B cell (primary cell): ENCODE measurements at regions of chr17 and their contacts with region 1.

Region 1: GRCh38 chr17:69523244-69523861 is 108.9 kb downstream of the MAP2K6 start:
- DNase-seq: peak; percentile 49
- ATAC-seq: peak; percentile 41
- H3K4me3 ChIP-seq: no peak overlapping the region
- H3K4me3 Mint-ChIP-seq: no peak overlapping the region
- H3K27ac ChIP-seq: no peak overlapping the region
- H3K27ac Mint-ChIP-seq: no peak overlapping the region
- H3K4me1 ChIP-seq: peaks cover 5% of the 10 kb centered on the region in 2 donors
- H3K4me1 Mint-ChIP-seq: peaks cover 13% of the 10 kb centered on the region
- H3K27me3 ChIP-seq: peaks cover 0 to 24% (median 11%) of the 10 kb centered on the region in 4 experiments
- H3K27me3 Mint-ChIP-seq: peaks cover 23% of the 10 kb centered on the region
- CTCF ChIP-seq: peak; percentile 75

Region 2: GRCh38 chr17:68771867-68772515 is 751.4 kb before region 1 on chr17:
- CTCF ChIA-PET with region 1: interaction called, 3 read pairs
- POLR2A ChIA-PET with region 1: no interaction called
- intact Hi-C with region 1: loop called (anchors 10 kb)
- DNase-seq: peak; percentile 65
- ATAC-seq: peak; percentile 49
- H3K4me3 ChIP-seq: peak overlapping the region in 1 of 5 experiments; percentile 25
- H3K4me3 Mint-ChIP-seq: peak overlapping the region; percentile 68
- H3K27ac ChIP-seq: no peak overlapping the region
- H3K27ac Mint-ChIP-seq: peak overlapping the region; percentile 26
- H3K4me1 ChIP-seq: no peaks in the 10 kb centered on the region
- H3K4me1 Mint-ChIP-seq: peaks cover 20% of the 10 kb centered on the region
- H3K27me3 ChIP-seq: no peaks in the 10 kb centered on the region
- H3K27me3 Mint-ChIP-seq: no peaks in the 10 kb centered on the region
- CTCF ChIP-seq: peak; percentile 72

Region 3: GRCh38 chr17:69335058-69335457 is 188.3 kb before region 1 on chr17:
- CTCF ChIA-PET with region 1: interaction called, 19 read pairs
- POLR2A ChIA-PET with region 1: no interaction called
- intact Hi-C with region 1: no loop called
- DNase-seq: peak; percentile 19
- ATAC-seq: peak; percentile 31
- H3K4me3 ChIP-seq: no peak overlapping the region
- H3K4me3 Mint-ChIP-seq: no peak overlapping the region
- H3K27ac ChIP-seq: no peak overlapping the region
- H3K27ac Mint-ChIP-seq: no peak overlapping the region
- H3K4me1 ChIP-seq: no peaks in the 10 kb centered on the region
- H3K4me1 Mint-ChIP-seq: no peaks in the 10 kb centered on the region
- H3K27me3 ChIP-seq: peaks cover 0 to 14% (median 1%) of the 10 kb centered on the region in 4 experiments
- H3K27me3 Mint-ChIP-seq: peaks cover 25% of the 10 kb centered on the region
- CTCF ChIP-seq: peak; percentile 19

Region 4: GRCh38 chr17:69390795-69391501 is 132.4 kb before region 1 on chr17:
- CTCF ChIA-PET with region 1: interaction called, 10 read pairs
- POLR2A ChIA-PET with region 1: no interaction called
- intact Hi-C with region 1: no loop called
- DNase-seq: no peak
- ATAC-seq: no peak
- H3K4me3 ChIP-seq: no peak overlapping the region
- H3K4me3 Mint-ChIP-seq: no peak overlapping the region
- H3K27ac ChIP-seq: no peak overlapping the region
- H3K27ac Mint-ChIP-seq: no peak overlapping the region
- H3K4me1 ChIP-seq: no peaks in the 10 kb centered on the region
- H3K4me1 Mint-ChIP-seq: no peaks in the 10 kb centered on the region
- H3K27me3 ChIP-seq: no peaks in the 10 kb centered on the region
- H3K27me3 Mint-ChIP-seq: peaks cover 38% of the 10 kb centered on the region
- CTCF ChIP-seq: no peak

Region 5: GRCh38 chr17:69501591-69502468 is 21.5 kb before region 1 on chr17:
- CTCF ChIA-PET with region 1: interaction called, 47 read pairs
- POLR2A ChIA-PET with region 1: no interaction called
- intact Hi-C with region 1: no loop called
- DNase-seq: no peak
- ATAC-seq: peak; percentile 23
- H3K4me3 ChIP-seq: peak overlapping the region in 1 of 5 experiments; percentile 70
- H3K4me3 Mint-ChIP-seq: peak overlapping the region; percentile 57
- H3K27ac ChIP-seq: no peak overlapping the region
- H3K27ac Mint-ChIP-seq: peak overlapping the region; percentile 28
- H3K4me1 ChIP-seq: peaks cover 41 to 44% of the 10 kb centered on the region in 2 donors
- H3K4me1 Mint-ChIP-seq: peaks cover 63% of the 10 kb centered on the region
- H3K27me3 ChIP-seq: no peaks in the 10 kb centered on the region
- H3K27me3 Mint-ChIP-seq: no peaks in the 10 kb centered on the region
- CTCF ChIP-seq: no peak

Region 6: DNA sequence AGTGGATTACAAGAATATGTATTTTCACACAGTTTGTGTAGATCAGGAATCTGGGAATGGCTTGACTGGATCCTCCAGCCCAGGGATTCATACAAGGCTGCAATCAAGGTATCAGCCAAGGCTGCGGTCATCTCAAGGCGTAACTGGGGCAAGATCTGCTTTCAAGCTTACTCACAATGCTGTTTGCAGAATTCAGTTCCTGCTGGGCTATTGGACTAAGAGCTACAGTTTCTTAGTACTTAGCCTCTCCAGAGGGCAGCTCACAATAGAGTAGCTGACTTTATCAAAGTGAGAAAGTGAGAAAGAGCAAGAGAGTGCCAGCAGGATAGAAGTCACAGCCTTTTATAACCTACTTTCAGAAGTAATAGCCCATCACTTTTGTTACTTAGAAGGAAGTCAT is 102.1 kb after region 1 on chr17:
- CTCF ChIA-PET with region 1: no interaction called
- POLR2A ChIA-PET with region 1: no interaction called
- intact Hi-C with region 1: no loop called
- DNase-seq: no peak
- ATAC-seq: no peak
- H3K4me3 ChIP-seq: no peak overlapping the region
- H3K4me3 Mint-ChIP-seq: no peak overlapping the region
- H3K27ac ChIP-seq: no peak overlapping the region
- H3K27ac Mint-ChIP-seq: no peak overlapping the region
- H3K4me1 ChIP-seq: no peaks in the 10 kb centered on the region
- H3K4me1 Mint-ChIP-seq: no peaks in the 10 kb centered on the region
- H3K27me3 ChIP-seq: no peaks in the 10 kb centered on the region
- H3K27me3 Mint-ChIP-seq: peaks cover 7% of the 10 kb centered on the region
- CTCF ChIP-seq: no peak

Region 7: GRCh38 chr17:70144260-70144846 is 621.0 kb after region 1 on chr17:
- CTCF ChIA-PET with region 1: interaction called, 19 read pairs
- POLR2A ChIA-PET with region 1: no interaction called
- intact Hi-C with region 1: no loop called
- DNase-seq: peak; percentile 38
- ATAC-seq: no peak
- H3K4me3 ChIP-seq: no peak overlapping the region
- H3K4me3 Mint-ChIP-seq: no peak overlapping the region
- H3K27ac ChIP-seq: no peak overlapping the region
- H3K27ac Mint-ChIP-seq: no peak overlapping the region
- H3K4me1 ChIP-seq: no peaks in the 10 kb centered on the region
- H3K4me1 Mint-ChIP-seq: no peaks in the 10 kb centered on the region
- H3K27me3 ChIP-seq: no peaks in the 10 kb centered on the region
- H3K27me3 Mint-ChIP-seq: peaks cover 6% of the 10 kb centered on the region
- CTCF ChIP-seq: peak; percentile 75